Prostate gland (tissue), 2 donors: ENCODE measurements at regions of chr3 and their contacts with region 1.

Region 1: DNA sequence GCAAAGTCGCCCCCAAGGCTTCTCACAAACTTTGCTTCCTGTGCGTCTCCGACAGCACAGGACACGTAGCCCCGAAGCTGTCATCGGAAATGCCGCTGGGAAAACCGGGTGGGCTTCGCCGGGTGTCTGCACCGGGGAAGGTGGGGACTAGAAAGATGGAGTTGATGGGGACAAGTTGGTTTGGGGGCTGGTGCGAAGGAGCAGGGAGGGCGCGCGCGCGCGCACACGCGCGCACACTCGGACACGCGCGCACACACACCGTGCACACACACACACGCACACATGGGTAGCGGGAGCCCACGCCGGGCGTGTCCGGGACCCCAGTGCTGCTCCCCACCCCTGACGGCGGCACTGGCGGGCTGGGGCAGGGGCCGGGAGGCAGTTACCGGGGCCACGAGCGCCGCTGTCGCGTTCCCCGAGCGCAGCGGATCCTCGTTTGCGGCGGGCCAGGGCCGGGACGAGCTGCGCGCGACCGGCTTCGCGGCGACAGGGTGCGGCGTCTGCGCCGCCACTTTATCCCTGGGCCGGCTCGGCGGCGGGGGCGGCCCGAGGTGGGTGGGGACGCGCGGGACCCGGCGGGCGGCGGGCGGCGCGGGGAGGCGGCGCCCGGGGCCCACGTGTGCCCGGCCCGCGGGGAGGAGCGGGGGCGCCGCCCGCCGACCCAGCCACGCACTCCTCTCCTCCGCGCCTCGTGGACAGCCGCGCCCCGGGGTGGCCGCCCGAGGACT is 547 bp upstream of the MGLL start:
- DNase-seq: no peak
- H3K4me3 ChIP-seq: peak overlapping the region; percentile 59 to 72
- H3K27ac ChIP-seq: peak overlapping the region; percentile 65 to 73
- H3K4me1 ChIP-seq: peaks cover 8% of the 10 kb centered on the region
- H3K27me3 ChIP-seq: no peaks in the 10 kb centered on the region
- CTCF ChIP-seq: peak in 2 of 4 experiments; percentile 34 to 44
- POLR2A ChIP-seq: no peak

Region 2: GRCh38 chr3:127556565-127556964 is 266.3 kb before region 1 on chr3:
- intact Hi-C with region 1: no loop called
- DNase-seq: no peak
- H3K4me3 ChIP-seq: no peak overlapping the region
- H3K27ac ChIP-seq: no peak overlapping the region
- H3K4me1 ChIP-seq: no peaks in the 10 kb centered on the region
- H3K27me3 ChIP-seq: no peaks in the 10 kb centered on the region
- CTCF ChIP-seq: no peak
- POLR2A ChIP-seq: no peak

Region 3: GRCh38 chr3:127574880-127575878 is 247.7 kb before region 1 on chr3:
- intact Hi-C with region 1: loop called (anchors 10 kb)
- DNase-seq: peak; percentile 87
- H3K4me3 ChIP-seq: no peak overlapping the region
- H3K27ac ChIP-seq: no peak overlapping the region
- H3K4me1 ChIP-seq: no peaks in the 10 kb centered on the region
- H3K27me3 ChIP-seq: no peaks in the 10 kb centered on the region
- CTCF ChIP-seq: peak; percentile 91 to 99 (median 98)
- POLR2A ChIP-seq: no peak

Region 4: GRCh38 chr3:127652231-127652995 is 170.4 kb before region 1 on chr3:
- intact Hi-C with region 1: loop called (anchors 5 kb)
- DNase-seq: no peak
- H3K4me3 ChIP-seq: no peak overlapping the region
- H3K27ac ChIP-seq: no peak overlapping the region
- H3K4me1 ChIP-seq: no peaks in the 10 kb centered on the region
- H3K27me3 ChIP-seq: no peaks in the 10 kb centered on the region
- CTCF ChIP-seq: peak; percentile 59 to 79 (median 74)
- POLR2A ChIP-seq: no peak

Region 5: GRCh38 chr3:127697551-127698240 is 125.2 kb before region 1 on chr3:
- intact Hi-C with region 1: loop called (anchors 2 kb)
- DNase-seq: peak; percentile 59
- H3K4me3 ChIP-seq: no peak overlapping the region
- H3K27ac ChIP-seq: peak overlapping the region; percentile 74 to 82
- H3K4me1 ChIP-seq: peaks cover 13% of the 10 kb centered on the region
- H3K27me3 ChIP-seq: no peaks in the 10 kb centered on the region
- CTCF ChIP-seq: no peak
- POLR2A ChIP-seq: no peak

Region 6: DNA sequence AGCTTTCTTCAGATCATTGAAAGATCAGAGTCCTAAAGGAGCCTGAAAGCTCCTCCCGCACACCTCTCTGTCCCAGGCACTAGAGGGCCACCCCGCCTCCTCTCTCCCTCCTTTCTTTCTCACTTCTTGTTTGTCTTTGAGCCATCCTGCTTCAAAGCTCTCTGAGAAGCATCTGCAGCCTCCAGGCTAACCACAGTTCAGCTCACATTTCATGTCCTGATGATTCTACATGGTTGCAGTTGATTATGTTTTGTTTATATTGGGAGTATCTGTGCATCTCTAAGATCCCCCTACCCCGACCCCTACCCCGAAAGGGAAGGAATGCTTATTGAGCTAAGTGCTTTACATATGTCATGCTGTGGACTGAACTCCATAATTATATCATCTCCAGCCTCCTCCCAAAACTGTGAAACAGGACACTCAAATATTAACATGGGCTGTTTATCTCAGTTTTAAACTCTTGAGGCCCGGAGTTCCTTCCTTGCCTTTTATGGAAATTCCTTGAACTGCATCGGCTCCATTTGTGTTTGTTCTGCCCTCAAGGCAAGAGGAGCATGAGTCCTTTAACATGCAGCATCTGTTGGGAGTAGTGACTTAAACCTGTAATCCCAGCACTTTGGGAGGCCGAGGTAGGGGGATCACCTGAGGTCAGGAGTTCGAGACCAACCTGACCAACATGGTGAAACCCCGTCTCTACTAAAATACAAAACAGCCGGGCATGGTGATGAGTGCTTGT is 31.5 kb before region 1 on chr3:
- intact Hi-C with region 1: loop called (anchors 2 kb)
- DNase-seq: peak; percentile 28
- H3K4me3 ChIP-seq: no peak overlapping the region
- H3K27ac ChIP-seq: peak overlapping the region; percentile 55 to 73
- H3K4me1 ChIP-seq: peaks cover 4% of the 10 kb centered on the region
- H3K27me3 ChIP-seq: no peaks in the 10 kb centered on the region
- CTCF ChIP-seq: peak in 2 of 4 experiments; percentile 24 to 38
- POLR2A ChIP-seq: no peak

Region 7: GRCh38 chr3:127889461-127889863 is 66.6 kb after region 1 on chr3:
- intact Hi-C with region 1: no loop called
- DNase-seq: no peak
- H3K4me3 ChIP-seq: no peak overlapping the region
- H3K27ac ChIP-seq: no peak overlapping the region
- H3K4me1 ChIP-seq: no peaks in the 10 kb centered on the region
- H3K27me3 ChIP-seq: no peaks in the 10 kb centered on the region
- CTCF ChIP-seq: no peak
- POLR2A ChIP-seq: no peak